Heart left ventricle (tissue), 16 donors: ENCODE measurements at regions of chr16 and their contacts with region 1.

Region 1: DNA sequence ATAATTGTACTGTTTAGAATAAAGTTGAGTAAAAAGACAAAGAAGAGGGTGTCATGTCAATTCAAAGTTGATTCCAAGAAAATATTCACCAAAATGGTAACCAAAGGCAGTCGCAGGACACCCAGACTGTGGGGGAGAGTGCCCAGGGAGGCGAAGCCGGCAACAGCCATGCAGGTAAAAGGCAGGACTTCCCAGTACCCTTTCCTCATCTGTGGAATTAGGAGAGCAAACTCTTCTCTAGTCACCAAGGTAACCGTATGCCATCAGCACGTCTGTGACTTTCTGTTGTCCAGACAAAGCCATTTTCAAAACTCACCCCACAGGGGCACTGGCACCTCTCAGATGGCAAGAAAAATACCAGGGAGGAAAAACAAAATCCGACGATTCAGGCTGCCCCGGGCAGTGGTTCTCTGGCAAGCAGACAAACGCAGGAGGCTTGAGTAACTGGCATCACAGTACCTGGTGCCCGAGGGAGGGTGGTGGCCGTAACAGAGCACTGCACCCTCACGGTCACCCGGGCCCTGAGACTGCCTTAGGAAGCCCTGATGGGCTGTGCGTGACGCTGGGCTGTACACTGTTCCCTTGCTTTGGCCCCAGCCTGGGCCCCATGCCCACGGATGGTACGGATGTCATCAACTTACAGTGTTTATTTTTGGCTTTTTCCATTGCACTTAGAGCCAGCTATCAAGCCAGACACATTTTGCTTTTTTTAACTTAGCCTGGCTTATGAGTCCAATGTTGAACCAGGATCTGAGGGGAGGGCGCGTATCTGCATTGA is 287.4 kb downstream of the FOXL1 start:
- DNase-seq: peak; percentile 83 to 94 (median 85)
- ATAC-seq: peak; percentile 98 to 99 (median 98)
- H3K4me3 ChIP-seq: no peak overlapping the region
- H3K27ac ChIP-seq: peak overlapping the region; percentile 58 to 97 (median 90)
- H3K4me1 ChIP-seq: peaks cover 0 to 21% (median 12%) of the 10 kb centered on the region in 12 donors
- H3K27me3 ChIP-seq: no peaks in the 10 kb centered on the region
- CTCF ChIP-seq: peak in 9 of 12 donors; percentile 9 to 54 (median 24)
- POLR2A ChIP-seq: no peak

Region 2: GRCh38 chr16:86984991-86985647 is 119.4 kb after region 1 on chr16:
- intact Hi-C with region 1: loop called in 3 of 10 experiments (anchors 5 to 10 kb)
- DNase-seq: peak; percentile 70 to 89 (median 76)
- ATAC-seq: peak; percentile 93 to 97 (median 96)
- H3K4me3 ChIP-seq: no peak overlapping the region
- H3K27ac ChIP-seq: peak overlapping the region in 11 of 12 donors; percentile 22 to 88 (median 76)
- H3K4me1 ChIP-seq: peaks cover 0 to 23% (median 0%) of the 10 kb centered on the region in 12 donors
- H3K27me3 ChIP-seq: no peaks in the 10 kb centered on the region
- CTCF ChIP-seq: no peak
- POLR2A ChIP-seq: no peak

Region 3: DNA sequence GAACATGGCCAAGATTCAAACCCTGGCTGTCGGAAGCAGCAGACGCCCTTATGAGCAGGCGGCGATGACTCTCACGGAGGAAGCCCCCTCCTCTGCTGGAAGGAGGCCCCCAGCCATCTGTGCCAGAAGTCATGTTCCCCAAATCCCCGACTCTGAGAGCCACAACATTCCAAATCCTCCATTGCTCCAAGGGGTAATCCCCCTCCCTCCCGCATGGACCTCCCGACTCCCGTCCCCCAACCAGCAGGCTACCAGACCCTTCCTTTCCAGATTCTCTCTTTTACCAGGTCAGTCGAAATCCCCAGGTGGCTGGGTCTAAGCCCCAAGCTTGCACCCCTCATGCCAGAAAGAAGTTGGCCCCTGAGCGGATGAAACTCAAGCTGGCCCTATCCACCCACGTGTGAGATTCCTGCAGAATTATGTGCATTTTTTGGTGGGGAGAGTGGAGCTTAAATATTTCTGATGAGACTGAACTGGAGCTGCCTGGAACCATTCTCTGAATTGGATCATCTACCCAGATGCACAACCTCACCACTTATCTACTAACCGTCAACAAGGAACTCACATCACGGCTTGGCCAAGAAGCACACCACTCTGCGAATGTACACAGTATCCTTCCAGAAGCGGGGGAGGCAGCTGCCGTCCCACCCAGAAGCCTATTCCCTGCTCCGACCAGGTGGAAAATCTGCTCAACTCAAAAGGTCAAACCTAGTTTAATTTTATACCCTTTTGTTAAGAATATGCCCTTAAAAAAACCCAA is 168.0 kb after region 1 on chr16:
- intact Hi-C with region 1: loop called in 1 of 10 experiments (anchors 5 kb)
- DNase-seq: peak in 4 of 5 donors; percentile 46 to 68 (median 63)
- ATAC-seq: peak; percentile 71 to 90 (median 79)
- H3K4me3 ChIP-seq: no peak overlapping the region
- H3K27ac ChIP-seq: peak overlapping the region in 8 of 12 donors; percentile 20 to 67 (median 60)
- H3K4me1 ChIP-seq: peaks cover 0 to 27% (median 14%) of the 10 kb centered on the region in 12 donors
- H3K27me3 ChIP-seq: no peaks in the 10 kb centered on the region
- CTCF ChIP-seq: no peak
- POLR2A ChIP-seq: no peak

Region 4: GRCh38 chr16:87043231-87044031 is 177.7 kb after region 1 on chr16:
- intact Hi-C with region 1: loop called in 2 of 10 experiments (anchors 5 to 10 kb)
- DNase-seq: peak in 2 of 5 donors; percentile 44 to 53
- ATAC-seq: peak; percentile 58 to 73 (median 67)
- H3K4me3 ChIP-seq: peak overlapping the region in 3 of 12 donors; percentile 1 to 18 (median 7)
- H3K27ac ChIP-seq: peak overlapping the region in 8 of 12 donors; percentile 4 to 59 (median 36)
- H3K4me1 ChIP-seq: peaks cover 0 to 21% (median 17%) of the 10 kb centered on the region in 12 donors
- H3K27me3 ChIP-seq: peaks cover 0 to 3% (median 0%) of the 10 kb centered on the region in 9 donors
- CTCF ChIP-seq: no peak
- POLR2A ChIP-seq: no peak